Endothelial cell of umbilical vein (primary cell): ENCODE measurements at regions of chr2 and their contacts with region 1.

Region 1: GRCh38 chr2:120312861-120313694 is 32.9 kb upstream of the INHBB start:
- DNase-seq: peak; percentile 90
- H3K4me3 ChIP-seq: peak overlapping the region; percentile 27 to 71 (median 57)
- H3K27ac ChIP-seq: no peak overlapping the region
- H3K4me1 ChIP-seq: peaks cover 16% of the 10 kb centered on the region
- H3K27me3 ChIP-seq: no peaks in the 10 kb centered on the region
- CTCF ChIP-seq: peak; percentile 86 to 91
- POLR2A ChIP-seq: peak; percentile 16

Region 2: GRCh38 chr2:119702918-119703401 is 610.1 kb before region 1 on chr2:
- CTCF ChIA-PET with region 1: interaction called, 16 read pairs
- POLR2A ChIA-PET with region 1: no interaction called
- dilution Hi-C with region 1: no loop called
- intact Hi-C with region 1: loop called (anchors 2 kb)
- DNase-seq: peak; percentile 67
- H3K4me3 ChIP-seq: no peak overlapping the region
- H3K27ac ChIP-seq: no peak overlapping the region
- H3K4me1 ChIP-seq: no peaks in the 10 kb centered on the region
- H3K27me3 ChIP-seq: no peaks in the 10 kb centered on the region
- CTCF ChIP-seq: peak; percentile 96
- POLR2A ChIP-seq: no peak

Region 3: GRCh38 chr2:120012771-120013596 is 300.1 kb before region 1 on chr2 and contains the start of gene EPB41L5:
- CTCF ChIA-PET with region 1: interaction called, 4 read pairs
- POLR2A ChIA-PET with region 1: no interaction called
- dilution Hi-C with region 1: no loop called
- intact Hi-C with region 1: loop called (anchors 10 kb)
- DNase-seq: peak; percentile 90
- H3K4me3 ChIP-seq: peak within 1 kb of the TSS; percentile 35 to 88 (median 46)
- H3K27ac ChIP-seq: peak within 1 kb of the TSS; percentile 30
- H3K4me1 ChIP-seq: peaks cover 24% of the 10 kb centered on the region
- H3K27me3 ChIP-seq: no peaks in the 10 kb centered on the region
- CTCF ChIP-seq: no peak
- POLR2A ChIP-seq: no peak
- total RNA-seq, gene EPB41L5: 13.6 and 15.1 TPM in 2 replicates

Region 4: GRCh38 chr2:120195553-120195952 is 117.5 kb before region 1 on chr2:
- CTCF ChIA-PET with region 1: interaction called, 14 read pairs
- POLR2A ChIA-PET with region 1: no interaction called
- dilution Hi-C with region 1: no loop called
- intact Hi-C with region 1: no loop called
- DNase-seq: no peak
- H3K4me3 ChIP-seq: no peak overlapping the region
- H3K27ac ChIP-seq: no peak overlapping the region
- H3K4me1 ChIP-seq: no peaks in the 10 kb centered on the region
- H3K27me3 ChIP-seq: peaks cover 5 to 12% of the 10 kb centered on the region in 2 experiments
- CTCF ChIP-seq: no peak
- POLR2A ChIP-seq: no peak

Region 5: DNA sequence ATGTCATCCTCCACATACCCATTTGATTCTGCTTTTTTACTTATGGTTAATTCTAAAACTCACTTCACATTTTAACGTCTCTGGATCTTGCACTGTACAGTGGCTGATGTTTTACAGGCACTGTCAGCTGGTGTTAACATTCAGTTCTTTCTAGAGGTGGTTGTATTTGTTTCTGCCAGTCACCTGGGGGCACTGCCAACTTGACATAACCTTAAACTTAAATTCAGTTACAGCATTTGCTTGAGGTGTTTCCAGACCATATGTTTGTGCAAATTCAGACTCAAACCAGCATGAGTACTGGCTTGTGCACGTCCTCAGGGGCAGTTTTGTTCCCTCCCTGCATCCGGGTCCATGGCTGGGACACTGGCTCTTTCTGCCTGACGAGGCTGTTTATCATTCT is 84.5 kb before region 1 on chr2:
- CTCF ChIA-PET with region 1: interaction called, 18 read pairs
- POLR2A ChIA-PET with region 1: no interaction called
- dilution Hi-C with region 1: no loop called
- intact Hi-C with region 1: loop called (anchors 1 kb)
- DNase-seq: no peak
- H3K4me3 ChIP-seq: no peak overlapping the region
- H3K27ac ChIP-seq: no peak overlapping the region
- H3K4me1 ChIP-seq: peaks cover 4% of the 10 kb centered on the region
- H3K27me3 ChIP-seq: peaks cover 0 to 3% of the 10 kb centered on the region in 2 experiments
- CTCF ChIP-seq: no peak
- POLR2A ChIP-seq: no peak

Region 6: DNA sequence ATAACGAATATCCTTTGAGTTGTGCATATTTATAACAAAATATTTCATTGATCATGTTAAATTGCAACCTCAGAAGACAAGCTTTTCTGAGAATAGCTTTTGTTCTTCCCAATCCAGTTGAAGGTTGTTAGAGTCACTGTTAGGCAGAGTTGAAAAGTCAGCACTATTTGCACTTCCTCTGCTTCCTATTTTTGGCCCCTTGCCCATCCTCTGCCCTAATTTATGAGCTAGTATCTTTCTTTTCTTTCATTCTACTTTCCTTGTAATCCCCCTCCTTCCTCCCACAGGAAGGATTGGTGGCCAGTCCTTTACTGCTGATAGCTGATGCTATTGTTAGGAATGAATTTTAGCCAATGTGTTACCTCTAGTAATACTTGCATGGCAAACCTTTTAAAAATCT is 55.6 kb before region 1 on chr2:
- CTCF ChIA-PET with region 1: interaction called, 41 read pairs
- POLR2A ChIA-PET with region 1: interaction called, 3 read pairs
- dilution Hi-C with region 1: no loop called
- intact Hi-C with region 1: loop called (anchors 1 kb)
- DNase-seq: peak; percentile 67
- H3K4me3 ChIP-seq: no peak overlapping the region
- H3K27ac ChIP-seq: no peak overlapping the region
- H3K4me1 ChIP-seq: peaks cover 64% of the 10 kb centered on the region
- H3K27me3 ChIP-seq: no peaks in the 10 kb centered on the region
- CTCF ChIP-seq: no peak
- POLR2A ChIP-seq: peak; percentile 33

Region 7: DNA sequence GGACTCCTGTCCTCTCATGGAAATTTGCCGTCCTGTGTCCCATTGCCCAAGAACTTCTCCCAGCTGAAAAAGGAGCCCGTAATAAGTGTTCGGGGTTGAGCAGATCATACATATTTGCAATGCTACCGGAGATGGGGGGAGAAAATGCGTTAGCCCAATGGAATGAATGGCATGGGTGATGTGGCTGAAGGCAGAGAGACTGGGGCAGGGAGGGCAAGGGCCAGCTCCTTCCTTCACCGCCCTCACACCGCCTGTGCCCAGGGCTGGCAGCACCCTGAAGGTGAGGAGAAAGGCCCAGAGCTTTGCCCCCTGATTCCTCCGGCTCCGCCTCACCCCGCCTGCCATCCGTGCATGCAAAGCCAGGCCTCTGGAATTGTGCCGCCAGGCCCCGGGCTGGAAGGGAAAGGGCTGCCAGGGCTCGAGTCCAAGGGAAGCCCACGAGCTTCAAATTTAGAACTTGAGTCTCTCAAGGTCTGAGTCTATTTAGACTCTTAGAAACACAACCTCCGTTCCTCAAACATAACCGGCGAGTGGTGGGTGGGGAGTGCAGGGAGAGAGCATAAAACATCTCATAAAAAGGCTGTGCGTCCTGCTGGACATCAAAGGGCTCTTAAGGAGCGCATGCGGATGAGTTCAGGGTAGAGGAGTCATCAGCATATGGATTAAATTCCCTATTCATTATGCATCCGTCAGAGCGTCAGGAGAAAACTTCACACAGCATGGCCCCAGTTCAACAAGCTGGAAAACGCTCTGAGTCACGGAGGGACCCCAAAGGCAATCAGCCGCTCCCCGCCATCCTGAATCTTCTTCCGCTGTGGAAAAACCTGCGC is 300.9 kb after region 1 on chr2:
- CTCF ChIA-PET with region 1: no interaction called
- POLR2A ChIA-PET with region 1: no interaction called
- dilution Hi-C with region 1: no loop called
- intact Hi-C with region 1: no loop called
- DNase-seq: no peak
- H3K4me3 ChIP-seq: no peak overlapping the region
- H3K27ac ChIP-seq: no peak overlapping the region
- H3K4me1 ChIP-seq: no peaks in the 10 kb centered on the region
- H3K27me3 ChIP-seq: peaks cover 0 to 1% of the 10 kb centered on the region in 2 experiments
- CTCF ChIP-seq: no peak
- POLR2A ChIP-seq: no peak

Region 8: GRCh38 chr2:120680136-120680761 is 367.2 kb after region 1 on chr2:
- CTCF ChIA-PET with region 1: interaction called, 56 read pairs
- POLR2A ChIA-PET with region 1: no interaction called
- dilution Hi-C with region 1: no loop called
- intact Hi-C with region 1: loop called (anchors 1 kb)
- DNase-seq: peak; percentile 76
- H3K4me3 ChIP-seq: no peak overlapping the region
- H3K27ac ChIP-seq: no peak overlapping the region
- H3K4me1 ChIP-seq: no peaks in the 10 kb centered on the region
- H3K27me3 ChIP-seq: peaks cover 10 to 12% of the 10 kb centered on the region in 2 experiments
- CTCF ChIP-seq: peak; percentile 54 to 67
- POLR2A ChIP-seq: no peak